AG04450 (cell line): ENCODE measurements at regions of chr12 and their contacts with region 1.

Region 1: DNA sequence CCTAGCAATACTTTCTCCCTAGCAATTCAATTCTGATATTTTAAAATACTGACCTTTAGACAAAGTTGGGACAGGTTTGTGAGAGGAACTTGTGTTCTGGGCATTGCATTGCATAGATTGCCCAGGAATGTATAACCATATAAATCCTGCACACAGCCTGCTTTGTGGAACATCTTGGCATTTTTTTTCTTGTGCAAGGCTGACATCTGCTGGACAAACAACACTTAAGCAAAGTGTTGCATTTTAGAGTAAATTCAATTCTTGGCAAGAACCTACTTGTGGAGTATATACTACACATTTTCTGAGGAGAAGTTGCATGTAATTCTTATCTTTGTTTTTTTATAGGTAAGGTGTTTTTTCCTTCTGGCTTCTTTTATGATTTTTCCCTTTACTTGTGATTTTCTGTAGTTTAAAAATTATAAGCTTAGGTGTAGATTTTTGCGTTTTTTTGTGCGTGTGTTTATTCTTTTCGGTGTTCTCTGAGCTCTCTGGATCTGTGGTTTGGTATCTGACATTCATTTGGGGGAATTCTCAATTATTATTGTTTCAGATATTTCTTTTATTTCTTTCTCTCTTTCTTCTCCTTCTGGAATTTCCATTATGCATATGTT is 26.4 kb downstream of the TESPA1 start:
- DNase-seq: peak; percentile 36
- H3K4me3 ChIP-seq: no peak overlapping the region
- H3K27ac ChIP-seq: no peak overlapping the region
- H3K27me3 ChIP-seq: no peaks in the 10 kb centered on the region
- CTCF ChIP-seq: peak; percentile 71

Region 2: DNA sequence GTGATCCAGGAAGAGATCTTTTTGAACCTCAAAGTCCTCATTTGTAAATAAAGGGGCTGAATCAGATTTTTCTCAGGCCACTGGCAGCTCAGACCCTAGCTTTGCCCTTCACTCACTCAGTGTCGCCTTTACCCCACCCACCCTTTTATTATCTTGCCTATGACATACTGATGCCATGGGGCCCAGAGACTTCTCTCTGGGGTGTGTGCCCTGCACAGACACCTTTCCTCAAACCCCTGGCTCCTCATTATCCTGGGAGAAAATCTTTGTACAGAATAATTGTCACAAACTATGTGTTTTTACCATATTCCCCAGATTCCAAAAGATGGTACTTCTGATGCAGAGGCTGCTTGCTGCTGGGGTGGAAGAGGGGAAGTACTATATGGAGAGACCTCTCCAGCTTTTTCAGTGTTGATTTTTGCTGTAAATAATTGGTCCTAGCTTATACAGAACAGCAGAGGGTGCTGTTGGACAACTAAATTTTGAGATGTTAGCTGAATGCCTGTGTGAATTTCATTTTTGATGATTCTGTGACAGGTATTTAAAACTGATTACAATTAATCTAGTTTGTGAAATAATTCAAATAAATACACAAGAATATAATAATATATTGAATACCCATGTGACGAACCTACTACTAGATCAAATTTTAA is 256.1 kb before region 1 on chr12:
- CTCF ChIA-PET with region 1: interaction called, 15 read pairs
- POLR2A ChIA-PET with region 1: no interaction called
- DNase-seq: no peak
- H3K4me3 ChIP-seq: no peak overlapping the region
- H3K27ac ChIP-seq: no peak overlapping the region
- H3K27me3 ChIP-seq: no peaks in the 10 kb centered on the region
- CTCF ChIP-seq: peak; percentile 59

Region 3: DNA sequence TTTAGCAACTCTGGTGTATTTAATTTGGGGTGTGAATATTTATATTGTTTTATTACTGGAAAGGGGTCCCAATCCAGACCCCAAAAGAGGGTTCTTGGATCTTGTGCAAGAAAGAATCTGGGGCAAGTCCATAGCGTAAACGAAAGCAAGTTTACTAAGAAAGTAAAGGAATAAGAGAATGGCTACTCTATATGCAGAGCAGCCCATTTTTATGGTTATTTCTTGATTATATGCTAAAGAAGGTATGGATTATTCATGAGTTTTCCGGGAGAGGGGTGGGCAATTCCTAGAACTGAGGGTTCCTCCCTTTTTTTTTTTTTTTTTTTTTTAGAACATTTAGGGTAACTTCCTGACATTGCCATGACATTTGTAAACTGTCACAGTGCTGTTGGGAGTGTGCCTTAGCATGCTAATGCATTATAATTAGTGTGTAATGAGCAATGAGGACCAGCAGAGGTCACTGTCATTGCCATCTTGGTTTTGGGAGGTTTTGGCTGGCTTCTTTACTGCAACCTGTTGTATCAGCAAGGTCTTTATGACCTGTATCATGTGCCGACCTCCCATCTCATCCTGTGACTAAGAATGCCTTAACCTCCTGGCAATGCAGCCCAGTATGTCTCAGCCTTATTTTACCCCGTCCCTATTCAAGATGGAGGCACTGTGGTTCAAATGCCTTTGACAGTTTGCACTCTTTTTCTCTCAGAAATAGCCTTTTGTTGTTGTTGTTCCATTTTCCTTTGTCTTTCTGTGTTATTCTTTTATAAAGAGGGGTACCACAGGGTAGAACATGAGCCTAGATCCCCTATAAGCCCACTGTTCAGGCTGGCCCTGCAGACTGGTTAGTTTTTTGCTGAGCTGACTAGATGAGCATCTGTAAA is 234.5 kb before region 1 on chr12:
- CTCF ChIA-PET with region 1: interaction called, 16 read pairs
- POLR2A ChIA-PET with region 1: no interaction called
- DNase-seq: no peak
- H3K4me3 ChIP-seq: no peak overlapping the region
- H3K27ac ChIP-seq: no peak overlapping the region
- H3K27me3 ChIP-seq: no peaks in the 10 kb centered on the region
- CTCF ChIP-seq: peak; percentile 67

Region 4: GRCh38 chr12:54749191-54749818 is 208.8 kb before region 1 on chr12:
- CTCF ChIA-PET with region 1: interaction called, 160 read pairs
- POLR2A ChIA-PET with region 1: no interaction called
- DNase-seq: peak; percentile 15
- H3K4me3 ChIP-seq: no peak overlapping the region
- H3K27ac ChIP-seq: no peak overlapping the region
- H3K27me3 ChIP-seq: no peaks in the 10 kb centered on the region
- CTCF ChIP-seq: peak; percentile 75

Region 5: DNA sequence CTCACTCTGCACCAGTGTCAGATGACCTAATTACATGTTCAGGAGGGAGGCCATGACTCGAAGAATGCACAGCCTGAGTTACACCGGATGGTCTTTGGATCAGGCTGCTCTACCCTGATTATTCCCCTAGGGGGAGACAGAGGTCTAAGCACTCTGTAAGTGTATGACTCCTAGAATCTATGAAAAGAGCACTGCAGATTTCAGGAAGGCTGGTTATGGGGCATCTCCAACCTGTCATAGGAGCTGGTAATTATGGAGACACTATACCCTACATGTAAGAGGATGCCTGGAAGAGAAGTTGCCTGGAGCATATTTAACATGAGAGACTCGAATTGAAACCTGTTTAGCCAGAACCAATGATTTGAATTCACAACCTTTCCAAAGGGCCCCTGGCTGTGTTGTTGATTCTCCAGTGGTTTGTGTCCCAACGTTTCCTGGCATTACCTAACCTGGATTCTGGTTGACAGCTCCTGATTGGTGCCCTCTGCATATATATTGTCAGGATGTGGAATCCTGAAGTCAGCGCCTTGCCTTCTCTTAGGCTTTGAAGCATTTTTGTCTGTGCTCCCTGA is 104.1 kb before region 1 on chr12 and contains the start of gene MUCL1:
- CTCF ChIA-PET with region 1: interaction called, 52 read pairs
- POLR2A ChIA-PET with region 1: no interaction called
- DNase-seq: peak; percentile 33
- H3K4me3 ChIP-seq: no peak within 1 kb of the TSS
- H3K27ac ChIP-seq: no peak within 1 kb of the TSS
- H3K27me3 ChIP-seq: no peaks in the 10 kb centered on the region
- CTCF ChIP-seq: peak; percentile 90
- polyA plus RNA-seq, gene MUCL1: not detected in 2 replicates

Region 6: GRCh38 chr12:54968181-54968730 is 10.1 kb after region 1 on chr12:
- CTCF ChIA-PET with region 1: interaction called, 47 read pairs
- POLR2A ChIA-PET with region 1: no interaction called
- DNase-seq: no peak
- H3K4me3 ChIP-seq: no peak overlapping the region
- H3K27ac ChIP-seq: no peak overlapping the region
- H3K27me3 ChIP-seq: no peaks in the 10 kb centered on the region
- CTCF ChIP-seq: no peak